Endothelial cell of umbilical vein (primary cell): ENCODE measurements at regions of chr3 and their contacts with region 1.

Region 1: GRCh38 chr3:10322352-10322710 is 1.4 kb upstream of the SEC13 start:
- DNase-seq: no peak
- H3K4me3 ChIP-seq: no peak overlapping the region
- H3K27ac ChIP-seq: no peak overlapping the region
- H3K4me1 ChIP-seq: peaks cover 25% of the 10 kb centered on the region
- H3K27me3 ChIP-seq: peaks cover 12 to 13% of the 10 kb centered on the region in 2 experiments
- CTCF ChIP-seq: peak; percentile 37 to 45
- POLR2A ChIP-seq: no peak

Region 2: GRCh38 chr3:9843715-9844438 is 478.5 kb before region 1 on chr3 and contains the start of gene RPUSD3:
- CTCF ChIA-PET with region 1: interaction called, 4 read pairs
- POLR2A ChIA-PET with region 1: no interaction called
- dilution Hi-C with region 1: no loop called
- intact Hi-C with region 1: loop called (anchors 5 kb)
- DNase-seq: peak; percentile 96
- H3K4me3 ChIP-seq: peak within 1 kb of the TSS; percentile 64 to 80 (median 77)
- H3K27ac ChIP-seq: peak within 1 kb of the TSS; percentile 11
- H3K4me1 ChIP-seq: peaks cover 14% of the 10 kb centered on the region
- H3K27me3 ChIP-seq: no peaks in the 10 kb centered on the region
- CTCF ChIP-seq: no peak
- POLR2A ChIP-seq: peak; percentile 77
- total RNA-seq, gene RPUSD3: 34.8 and 38.9 TPM in 2 replicates

Region 3: GRCh38 chr3:9986237-9986725 is 336.1 kb before region 1 on chr3:
- CTCF ChIA-PET with region 1: no interaction called
- POLR2A ChIA-PET with region 1: no interaction called
- dilution Hi-C with region 1: no loop called
- intact Hi-C with region 1: loop called (anchors 2 kb)
- DNase-seq: no peak
- H3K4me3 ChIP-seq: peak overlapping the region; percentile 45 to 71 (median 65)
- H3K27ac ChIP-seq: peak overlapping the region; percentile 54
- H3K4me1 ChIP-seq: peaks cover 17% of the 10 kb centered on the region
- H3K27me3 ChIP-seq: no peaks in the 10 kb centered on the region
- CTCF ChIP-seq: no peak
- POLR2A ChIP-seq: no peak

Region 4: GRCh38 chr3:10310578-10310977 is 11.8 kb before region 1 on chr3:
- CTCF ChIA-PET with region 1: interaction called, 11 read pairs
- POLR2A ChIA-PET with region 1: interaction called, 8 read pairs
- dilution Hi-C with region 1: no loop called
- intact Hi-C with region 1: loop called (anchors 1 kb)
- DNase-seq: no peak
- H3K4me3 ChIP-seq: no peak overlapping the region
- H3K27ac ChIP-seq: peak overlapping the region; percentile 73
- H3K4me1 ChIP-seq: peaks cover 48% of the 10 kb centered on the region
- H3K27me3 ChIP-seq: no peaks in the 10 kb centered on the region
- CTCF ChIP-seq: no peak
- POLR2A ChIP-seq: no peak

Region 5: GRCh38 chr3:10738688-10739372 is 416.5 kb after region 1 on chr3:
- CTCF ChIA-PET with region 1: interaction called, 12 read pairs
- POLR2A ChIA-PET with region 1: no interaction called
- dilution Hi-C with region 1: no loop called
- intact Hi-C with region 1: no loop called
- DNase-seq: peak; percentile 70
- H3K4me3 ChIP-seq: peak overlapping the region in 1 of 3 experiments; percentile 18
- H3K27ac ChIP-seq: no peak overlapping the region
- H3K4me1 ChIP-seq: no peaks in the 10 kb centered on the region
- H3K27me3 ChIP-seq: peaks cover 0 to 5% of the 10 kb centered on the region in 2 experiments
- CTCF ChIP-seq: peak; percentile 75 to 89
- POLR2A ChIP-seq: no peak